ENCODE measurements at regions of chr1 and their contacts with region 1.

Region 1: GRCh38 chr1:243713470-243714186 is 136.4 kb downstream of the AKT3 start:
- DNase-seq: no peak
- H3K4me3 Mint-ChIP-seq: peak overlapping the region; percentile 8
- H3K27ac Mint-ChIP-seq: no peak overlapping the region
- H3K4me1 Mint-ChIP-seq: peaks cover 29% of the 10 kb centered on the region
- H3K27me3 Mint-ChIP-seq: no peaks in the 10 kb centered on the region
- CTCF ChIP-seq: no peak

Region 2: GRCh38 chr1:243393096-243393495 is 320.5 kb before region 1 on chr1:
- CTCF ChIA-PET with region 1: no interaction called
- intact Hi-C with region 1: no loop called
- DNase-seq: no peak
- H3K4me3 Mint-ChIP-seq: no peak overlapping the region
- H3K27ac Mint-ChIP-seq: peak overlapping the region; percentile 56
- H3K4me1 Mint-ChIP-seq: peaks cover 70% of the 10 kb centered on the region
- H3K27me3 Mint-ChIP-seq: no peaks in the 10 kb centered on the region
- CTCF ChIP-seq: no peak

Region 3: GRCh38 chr1:243638186-243638585 is 75.4 kb before region 1 on chr1:
- CTCF ChIA-PET with region 1: no interaction called
- intact Hi-C with region 1: no loop called
- DNase-seq: no peak
- H3K4me3 Mint-ChIP-seq: no peak overlapping the region
- H3K27ac Mint-ChIP-seq: no peak overlapping the region
- H3K4me1 Mint-ChIP-seq: no peaks in the 10 kb centered on the region
- H3K27me3 Mint-ChIP-seq: no peaks in the 10 kb centered on the region
- CTCF ChIP-seq: no peak

Region 4: GRCh38 chr1:244065960-244066388 is 352.3 kb after region 1 on chr1:
- CTCF ChIA-PET with region 1: no interaction called
- intact Hi-C with region 1: loop called (anchors 10 kb)
- DNase-seq: no peak
- H3K4me3 Mint-ChIP-seq: no peak overlapping the region
- H3K27ac Mint-ChIP-seq: no peak overlapping the region
- H3K4me1 Mint-ChIP-seq: peaks cover 45% of the 10 kb centered on the region
- H3K27me3 Mint-ChIP-seq: no peaks in the 10 kb centered on the region
- CTCF ChIP-seq: no peak

Measured in Calu3 (cell line).